ENCODE measurements at regions of chr9 and their contacts with region 1.

Region 1: GRCh38 chr9:33623658-33624586 is 99.9 kb downstream of the ANKRD18B start:
- DNase-seq: peak; percentile 82
- H3K4me3 ChIP-seq: no peak overlapping the region
- H3K27ac ChIP-seq: no peak overlapping the region
- H3K4me1 ChIP-seq: no peaks in the 10 kb centered on the region
- H3K27me3 ChIP-seq: peaks cover 3% of the 10 kb centered on the region
- CTCF ChIP-seq: peak; percentile 77

Region 2: GRCh38 chr9:33381231-33381791 is 242.6 kb before region 1 on chr9:
- CTCF ChIA-PET with region 1: no interaction called
- POLR2A ChIA-PET with region 1: no interaction called
- intact Hi-C with region 1: no loop called
- DNase-seq: no peak
- H3K4me3 ChIP-seq: no peak overlapping the region
- H3K27ac ChIP-seq: no peak overlapping the region
- H3K4me1 ChIP-seq: no peaks in the 10 kb centered on the region
- H3K27me3 ChIP-seq: no peaks in the 10 kb centered on the region
- CTCF ChIP-seq: no peak

Region 3: DNA sequence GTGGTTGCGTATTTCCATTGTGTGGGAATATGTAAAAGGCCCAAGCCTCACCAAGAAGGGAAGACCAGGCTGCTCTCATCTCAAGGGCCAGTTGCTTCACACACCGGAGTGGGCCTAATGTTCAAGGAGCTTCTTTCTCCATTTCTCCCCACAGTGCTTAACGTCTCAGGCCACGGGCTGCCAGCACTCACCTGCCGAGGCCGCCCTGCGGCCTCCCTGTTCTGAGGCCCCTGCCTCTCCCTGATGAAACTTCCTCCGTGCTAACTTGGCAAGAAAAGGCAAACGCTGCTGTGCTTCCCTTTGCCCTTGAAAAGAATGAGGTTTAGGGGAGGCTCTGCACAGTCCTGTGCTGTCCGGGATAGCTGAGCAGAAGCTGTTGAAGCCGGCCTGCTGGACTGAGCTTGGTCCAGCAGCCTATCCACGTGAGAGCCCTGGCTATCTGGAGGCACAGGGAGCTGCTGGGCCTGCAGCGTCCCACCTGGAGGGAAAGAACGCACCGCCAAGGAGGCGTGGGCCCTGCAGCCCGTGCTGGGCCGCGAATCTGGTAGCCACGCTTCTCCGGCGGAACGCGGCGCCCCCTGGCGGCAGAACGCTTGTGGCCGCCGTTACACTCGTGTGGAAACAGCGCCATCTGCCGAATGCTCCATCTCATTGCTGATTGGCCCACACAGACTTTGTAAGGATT is 97.9 kb after region 1 on chr9:
- CTCF ChIA-PET with region 1: interaction called, 57 read pairs
- POLR2A ChIA-PET with region 1: no interaction called
- intact Hi-C with region 1: loop called (anchors 1 kb)
- DNase-seq: peak; percentile 84
- H3K4me3 ChIP-seq: no peak overlapping the region
- H3K27ac ChIP-seq: no peak overlapping the region
- H3K4me1 ChIP-seq: no peaks in the 10 kb centered on the region
- H3K27me3 ChIP-seq: peaks cover 13% of the 10 kb centered on the region
- CTCF ChIP-seq: peak; percentile 100

Region 4: DNA sequence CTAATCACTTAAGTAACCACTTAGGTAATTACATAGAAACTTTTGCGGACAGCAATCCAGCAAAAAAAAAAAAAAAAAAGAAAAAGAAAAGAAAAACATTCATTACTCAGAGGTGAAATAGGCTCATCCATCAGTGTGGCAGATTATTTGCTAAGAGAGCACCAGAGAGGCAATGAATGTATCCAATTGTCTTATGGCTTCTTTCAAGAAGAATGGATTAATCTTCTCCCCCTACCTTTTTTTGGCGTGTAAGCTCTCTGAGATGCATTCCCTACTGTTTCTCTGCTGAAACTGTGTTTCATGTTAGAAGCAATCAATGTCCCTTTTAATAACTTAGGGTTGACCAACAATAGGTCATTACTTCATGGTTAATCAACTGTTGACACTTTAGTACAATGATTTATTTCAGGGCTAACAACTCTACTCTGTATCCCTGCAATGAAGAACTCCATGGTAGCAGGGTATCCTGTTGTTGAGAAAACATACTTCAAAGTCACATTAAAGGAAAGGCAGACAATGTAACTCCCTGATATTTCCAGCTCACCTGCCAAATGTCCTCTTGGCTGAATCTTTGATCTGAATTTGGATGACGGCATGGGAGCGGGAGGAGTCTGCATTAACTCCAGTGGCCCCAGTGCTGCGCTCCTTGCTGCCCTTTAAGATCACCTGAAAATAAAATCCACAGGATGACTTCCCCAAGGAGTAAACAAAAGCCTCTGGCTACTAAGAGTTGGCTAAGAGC is 647.5 kb after region 1 on chr9:
- CTCF ChIA-PET with region 1: no interaction called
- POLR2A ChIA-PET with region 1: no interaction called
- intact Hi-C with region 1: no loop called
- DNase-seq: no peak
- H3K4me3 ChIP-seq: no peak overlapping the region
- H3K27ac ChIP-seq: no peak overlapping the region
- H3K4me1 ChIP-seq: no peaks in the 10 kb centered on the region
- H3K27me3 ChIP-seq: no peaks in the 10 kb centered on the region
- CTCF ChIP-seq: no peak